Activated CD4-positive, alpha-beta memory T cell treated with anti-CD3 and anti-CD28 coated beads for 36 hours (primary cell): ENCODE measurements at regions of chr5 and their contacts with region 1.

Region 1: DNA sequence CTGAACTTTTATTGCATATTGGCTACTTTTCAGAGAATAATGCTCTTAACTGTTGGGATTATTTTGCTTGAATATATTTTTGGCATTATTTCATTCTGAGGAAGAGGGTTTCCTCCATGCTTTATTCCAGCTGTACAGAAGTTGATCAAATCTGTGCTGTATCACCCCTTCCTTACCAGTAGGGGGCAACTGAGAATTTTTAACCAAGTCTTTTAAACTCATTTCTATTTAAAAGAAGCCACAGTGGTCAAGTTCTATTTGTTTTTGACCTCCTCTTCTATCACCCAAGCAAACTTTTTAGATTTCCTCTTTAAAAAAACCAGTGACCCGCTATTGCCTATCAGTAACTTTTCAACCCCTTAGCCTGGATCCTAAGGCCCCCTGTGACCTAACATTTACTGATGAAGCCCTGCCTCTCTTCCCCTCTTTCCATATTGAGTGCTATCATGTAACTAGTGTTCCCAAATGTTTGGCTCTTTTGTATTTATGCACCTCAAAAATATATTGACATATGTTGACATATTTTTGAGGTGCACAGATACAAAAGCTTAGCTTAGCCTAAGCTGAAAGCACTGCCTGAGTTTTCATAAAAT is 80.6 kb downstream of the FBXO4 start:
- DNase-seq: no peak
- H3K4me3 Mint-ChIP-seq: no peak overlapping the region
- H3K27ac Mint-ChIP-seq: no peak overlapping the region
- H3K4me1 Mint-ChIP-seq: no peaks in the 10 kb centered on the region
- H3K27me3 Mint-ChIP-seq: peaks cover 3% of the 10 kb centered on the region

Region 2: GRCh38 chr5:41985945-41986344 is 19.7 kb before region 1 on chr5:
- CTCF ChIA-PET with region 1: interaction called, 11 read pairs
- POLR2A ChIA-PET with region 1: no interaction called
- intact Hi-C with region 1: no loop called
- DNase-seq: no peak
- H3K4me3 Mint-ChIP-seq: no peak overlapping the region
- H3K27ac Mint-ChIP-seq: no peak overlapping the region
- H3K4me1 Mint-ChIP-seq: no peaks in the 10 kb centered on the region
- H3K27me3 Mint-ChIP-seq: peaks cover 16% of the 10 kb centered on the region

Region 3: DNA sequence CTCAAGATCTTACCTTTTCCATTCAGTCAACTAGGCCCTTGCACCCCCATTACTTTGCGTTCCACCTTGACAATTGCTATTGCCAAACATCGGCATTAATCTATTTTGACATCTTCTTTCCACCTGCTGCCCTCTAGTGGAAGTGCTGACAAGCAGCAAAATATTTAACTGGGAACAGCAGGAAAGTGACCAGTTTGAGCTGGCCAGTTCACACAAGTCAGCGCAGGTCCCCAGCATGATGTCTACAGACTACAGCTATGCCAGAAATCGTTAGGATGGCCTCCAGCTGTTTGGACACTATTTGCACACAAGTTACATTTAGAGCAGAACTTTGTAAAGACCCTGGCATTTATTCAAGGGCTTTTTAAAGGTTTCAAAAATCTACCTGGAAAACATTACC is 577.7 kb after region 1 on chr5:
- CTCF ChIA-PET with region 1: interaction called, 13 read pairs
- POLR2A ChIA-PET with region 1: no interaction called
- intact Hi-C with region 1: no loop called
- DNase-seq: peak; percentile 31
- H3K4me3 Mint-ChIP-seq: no peak overlapping the region
- H3K27ac Mint-ChIP-seq: no peak overlapping the region
- H3K4me1 Mint-ChIP-seq: peaks cover 2% of the 10 kb centered on the region
- H3K27me3 Mint-ChIP-seq: peaks cover 13% of the 10 kb centered on the region